Caco-2 (cell line): ENCODE measurements at regions of chr10 and their contacts with region 1.

Region 1: DNA sequence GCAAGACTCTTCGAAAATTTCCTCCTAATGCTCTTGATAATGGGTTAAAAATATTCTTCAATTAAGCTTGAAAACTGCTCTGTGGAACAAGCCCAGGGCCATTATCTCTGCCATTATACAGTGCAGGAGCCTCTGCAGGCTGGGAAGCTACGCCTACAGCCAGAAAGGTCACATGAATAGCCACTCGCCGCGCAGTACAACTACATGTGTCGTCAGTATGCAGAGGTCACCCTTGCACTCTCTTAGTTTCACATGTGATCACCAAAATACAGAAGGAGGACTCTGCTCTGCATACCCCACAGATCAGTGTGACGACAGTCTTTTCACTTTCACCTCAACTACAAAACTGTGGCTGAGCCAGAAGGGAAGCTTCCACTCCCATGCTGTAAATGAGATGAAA is 141.8 kb upstream of the C1QL3 start:
- DNase-seq: no peak
- H3K4me3 ChIP-seq: no peak overlapping the region
- H3K4me3 Mint-ChIP-seq: no peak overlapping the region
- H3K27ac Mint-ChIP-seq: no peak overlapping the region
- H3K4me1 ChIP-seq: no peaks in the 10 kb centered on the region
- H3K4me1 Mint-ChIP-seq: no peaks in the 10 kb centered on the region
- H3K27me3 ChIP-seq: no peaks in the 10 kb centered on the region
- H3K27me3 Mint-ChIP-seq: no peaks in the 10 kb centered on the region
- CTCF ChIP-seq: no peak

Region 2: GRCh38 chr10:16445770-16446469 is 217.5 kb before region 1 on chr10:
- CTCF ChIA-PET with region 1: no interaction called
- POLR2A ChIA-PET with region 1: no interaction called
- intact Hi-C with region 1: no loop called
- DNase-seq: no peak
- H3K4me3 ChIP-seq: no peak overlapping the region
- H3K4me3 Mint-ChIP-seq: no peak overlapping the region
- H3K27ac Mint-ChIP-seq: no peak overlapping the region
- H3K4me1 ChIP-seq: no peaks in the 10 kb centered on the region
- H3K4me1 Mint-ChIP-seq: peaks cover under 1% of the 10 kb centered on the region
- H3K27me3 ChIP-seq: no peaks in the 10 kb centered on the region
- H3K27me3 Mint-ChIP-seq: no peaks in the 10 kb centered on the region
- CTCF ChIP-seq: no peak

Region 3: GRCh38 chr10:16717622-16718395 is 54.4 kb after region 1 on chr10:
- CTCF ChIA-PET with region 1: no interaction called
- POLR2A ChIA-PET with region 1: interaction called, 15 read pairs
- intact Hi-C with region 1: no loop called
- DNase-seq: no peak
- H3K4me3 ChIP-seq: no peak overlapping the region
- H3K4me3 Mint-ChIP-seq: no peak overlapping the region
- H3K27ac Mint-ChIP-seq: no peak overlapping the region
- H3K4me1 ChIP-seq: peaks cover 19% of the 10 kb centered on the region
- H3K4me1 Mint-ChIP-seq: peaks cover 10% of the 10 kb centered on the region
- H3K27me3 ChIP-seq: no peaks in the 10 kb centered on the region
- H3K27me3 Mint-ChIP-seq: no peaks in the 10 kb centered on the region
- CTCF ChIP-seq: no peak

Region 4: DNA sequence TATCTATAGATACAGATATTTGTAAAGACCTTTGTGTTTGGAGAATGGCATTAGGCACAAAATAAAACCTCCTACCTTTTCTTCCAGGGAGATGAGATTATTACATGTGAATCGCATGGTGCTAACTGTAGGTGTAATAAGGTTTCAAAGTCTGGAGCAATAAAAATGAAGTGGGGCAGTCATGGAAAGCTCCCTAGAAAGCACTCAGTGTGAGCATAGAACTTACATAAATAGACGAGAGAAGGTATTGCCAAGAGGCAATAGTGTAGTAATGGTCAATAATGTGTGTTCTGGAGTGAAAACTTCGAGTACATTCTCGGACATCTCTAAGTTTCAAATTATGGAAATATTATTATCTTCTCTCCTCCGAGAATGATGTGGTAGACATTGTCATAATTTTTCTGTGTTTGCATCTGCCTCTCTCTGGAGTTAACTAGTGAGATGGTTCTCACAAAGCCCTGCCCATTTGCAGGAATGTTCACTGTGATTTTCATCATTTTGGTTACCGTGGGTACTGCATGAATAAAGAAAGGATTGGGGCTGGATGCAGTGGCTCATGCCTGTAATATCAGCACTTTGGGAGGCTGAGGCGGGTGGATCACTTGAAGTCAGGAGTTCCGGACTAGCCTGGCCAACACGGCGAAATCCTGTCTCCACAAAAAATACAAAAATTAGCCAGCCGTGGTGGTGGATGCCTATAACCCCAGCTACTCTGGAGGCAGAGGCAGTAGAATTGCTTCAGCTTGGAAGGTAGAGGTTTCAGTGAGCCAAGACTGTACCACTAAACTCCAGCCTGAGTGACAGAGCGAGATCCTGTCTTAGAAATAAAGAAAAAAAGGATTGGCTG is 575.2 kb after region 1 on chr10:
- CTCF ChIA-PET with region 1: no interaction called
- POLR2A ChIA-PET with region 1: no interaction called
- intact Hi-C with region 1: no loop called
- DNase-seq: no peak
- H3K4me3 ChIP-seq: no peak overlapping the region
- H3K4me3 Mint-ChIP-seq: no peak overlapping the region
- H3K27ac Mint-ChIP-seq: no peak overlapping the region
- H3K4me1 ChIP-seq: no peaks in the 10 kb centered on the region
- H3K4me1 Mint-ChIP-seq: no peaks in the 10 kb centered on the region
- H3K27me3 ChIP-seq: no peaks in the 10 kb centered on the region
- H3K27me3 Mint-ChIP-seq: peaks cover 3% of the 10 kb centered on the region
- CTCF ChIP-seq: no peak